Spleen (tissue), 13 donors: ENCODE measurements at regions of chr13 and their contacts with region 1.

Region 1: GRCh38 chr13:50125537-50126262 is 110.5 kb downstream of the KCNRG start:
- DNase-seq: peak; percentile 98
- H3K4me3 ChIP-seq: peak overlapping the region; percentile 74 to 92 (median 87)
- H3K27ac ChIP-seq: peak overlapping the region; percentile 99 to 100 (median 100)
- H3K4me1 ChIP-seq: peaks cover 37 to 79% (median 76%) of the 10 kb centered on the region in 6 donors
- H3K27me3 ChIP-seq: peaks cover 0 to 38% (median 28%) of the 10 kb centered on the region in 7 donors
- CTCF ChIP-seq: peak in 1 of 11 experiments; percentile 9
- POLR2A ChIP-seq: peak in 1 of 3 donors; percentile 78

Region 2: GRCh38 chr13:50055454-50055853 is 70.2 kb before region 1 on chr13:
- intact Hi-C with region 1: no loop called
- DNase-seq: no peak
- H3K4me3 ChIP-seq: peak overlapping the region in 1 of 8 donors; percentile 4
- H3K27ac ChIP-seq: peak overlapping the region in 4 of 8 donors; percentile 11 to 58 (median 32)
- H3K4me1 ChIP-seq: peaks cover 0 to 26% (median 15%) of the 10 kb centered on the region in 6 donors
- H3K27me3 ChIP-seq: no peaks in the 10 kb centered on the region
- CTCF ChIP-seq: no peak
- POLR2A ChIP-seq: no peak

Region 3: GRCh38 chr13:50081679-50082425 is 43.8 kb before region 1 on chr13:
- intact Hi-C with region 1: loop called (anchors 5 kb)
- DNase-seq: peak; percentile 99
- H3K4me3 ChIP-seq: peak overlapping the region; percentile 66 to 91 (median 82)
- H3K27ac ChIP-seq: peak overlapping the region; percentile 79 to 95 (median 92)
- H3K4me1 ChIP-seq: peaks cover 22 to 88% (median 70%) of the 10 kb centered on the region in 6 donors
- H3K27me3 ChIP-seq: no peaks in the 10 kb centered on the region
- CTCF ChIP-seq: peak in 3 of 11 experiments; percentile 5 to 9 (median 9)
- POLR2A ChIP-seq: peak in 2 of 3 donors; percentile 3 to 5

Region 4: GRCh38 chr13:50255639-50256038 is 129.9 kb after region 1 on chr13:
- intact Hi-C with region 1: no loop called
- DNase-seq: no peak
- H3K4me3 ChIP-seq: no peak overlapping the region
- H3K27ac ChIP-seq: peak overlapping the region in 1 of 8 donors; percentile 2
- H3K4me1 ChIP-seq: peaks cover 0 to 27% (median 7%) of the 10 kb centered on the region in 6 donors
- H3K27me3 ChIP-seq: no peaks in the 10 kb centered on the region
- CTCF ChIP-seq: no peak
- POLR2A ChIP-seq: no peak

Region 5: GRCh38 chr13:51262501-51263211 is 1137.0 kb after region 1 on chr13:
- intact Hi-C with region 1: no loop called
- DNase-seq: no peak
- H3K4me3 ChIP-seq: no peak overlapping the region
- H3K27ac ChIP-seq: no peak overlapping the region
- H3K4me1 ChIP-seq: peaks cover 0 to 28% (median 7%) of the 10 kb centered on the region in 6 donors
- H3K27me3 ChIP-seq: no peaks in the 10 kb centered on the region
- CTCF ChIP-seq: no peak
- POLR2A ChIP-seq: no peak